Endothelial cell of umbilical vein (primary cell): ENCODE measurements at regions of chr18 and their contacts with region 1.

Region 1: DNA sequence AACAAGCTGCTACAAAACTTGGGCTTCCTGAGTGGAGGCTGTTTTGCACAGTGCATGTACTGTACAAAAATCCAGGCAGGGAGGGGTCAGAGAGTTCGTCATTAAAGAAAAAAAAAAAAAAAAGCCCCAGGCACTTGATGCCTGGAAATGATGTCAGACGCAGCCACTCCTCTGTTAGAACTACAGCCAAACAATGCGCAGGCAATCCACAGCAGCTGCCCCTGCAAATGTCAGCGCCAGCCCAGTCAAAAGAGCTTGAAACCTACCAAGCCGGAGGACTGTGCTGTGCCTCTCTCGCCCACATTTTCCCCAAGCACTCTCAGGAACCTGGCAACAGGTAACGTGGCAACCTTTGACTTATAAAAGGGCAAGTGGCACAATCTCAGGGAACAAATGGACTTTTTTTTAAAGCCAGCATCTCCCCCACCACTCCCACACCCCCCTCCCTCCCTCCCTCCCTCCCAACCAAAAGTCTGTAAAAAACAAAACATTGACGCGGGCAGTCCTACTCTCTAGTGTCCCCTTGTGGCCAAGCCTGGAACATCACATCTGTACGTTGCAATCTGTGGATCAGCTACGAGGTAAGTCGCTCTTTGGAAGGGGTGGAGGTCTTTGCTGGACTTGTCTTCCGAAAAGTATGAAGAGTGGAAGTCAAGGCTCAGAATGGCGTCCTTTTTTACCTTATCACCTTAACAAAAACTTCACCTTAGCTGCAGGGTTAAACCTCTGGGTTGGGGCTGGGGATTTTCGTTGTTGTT is 144.1 kb downstream of the TGIF1 start:
- DNase-seq: peak; percentile 98
- H3K4me3 ChIP-seq: peak overlapping the region; percentile 8 to 93 (median 48)
- H3K27ac ChIP-seq: peak overlapping the region; percentile 100
- H3K4me1 ChIP-seq: peaks cover 48% of the 10 kb centered on the region
- H3K27me3 ChIP-seq: no peaks in the 10 kb centered on the region
- CTCF ChIP-seq: peak; percentile 62 to 80
- POLR2A ChIP-seq: peak; percentile 81

Region 2: DNA sequence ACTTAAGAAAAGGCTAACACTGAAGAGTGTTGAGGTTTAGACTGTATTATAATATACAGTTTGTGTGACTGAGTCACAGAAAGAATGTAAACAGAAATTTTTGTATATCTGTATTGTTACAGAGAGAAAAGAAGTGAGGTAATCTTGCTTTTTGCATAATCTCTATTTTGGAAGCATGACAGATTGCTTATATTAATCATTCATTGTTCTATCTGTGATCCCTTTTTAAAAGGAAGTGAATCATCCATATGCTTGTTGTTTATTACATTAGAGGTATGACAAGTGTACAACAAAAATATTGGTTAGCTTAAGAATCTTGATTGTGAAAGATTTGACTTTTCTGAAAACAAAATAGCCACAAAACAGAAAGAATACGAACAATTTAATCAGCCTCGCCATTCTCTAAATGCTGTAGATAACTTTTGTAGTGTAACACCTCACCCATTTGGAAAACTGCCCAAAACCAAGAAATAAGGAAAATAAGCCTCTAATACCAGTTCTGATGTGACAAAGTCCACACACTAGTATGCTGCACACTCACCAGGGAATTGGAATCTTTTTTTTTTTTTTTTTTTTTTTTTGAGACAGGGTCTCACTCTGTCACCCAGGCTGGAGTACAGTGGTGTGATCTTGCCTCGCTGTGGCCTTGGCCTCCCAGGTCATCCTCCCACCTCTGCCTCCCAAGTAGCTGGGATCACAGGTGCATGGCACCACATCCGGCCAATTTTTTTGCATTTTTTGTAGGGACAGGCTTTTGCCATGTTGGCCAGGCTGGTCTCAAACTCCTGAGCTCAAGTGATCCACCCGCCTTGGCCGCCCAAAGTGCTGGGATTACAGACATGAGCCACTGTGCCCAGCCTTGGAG is 489.7 kb before region 1 on chr18:
- CTCF ChIA-PET with region 1: no interaction called
- POLR2A ChIA-PET with region 1: no interaction called
- dilution Hi-C with region 1: no loop called
- intact Hi-C with region 1: no loop called
- DNase-seq: peak; percentile 91
- H3K4me3 ChIP-seq: peak overlapping the region in 1 of 3 experiments; percentile 21
- H3K27ac ChIP-seq: peak overlapping the region; percentile 96
- H3K4me1 ChIP-seq: peaks cover 30% of the 10 kb centered on the region
- H3K27me3 ChIP-seq: no peaks in the 10 kb centered on the region
- CTCF ChIP-seq: no peak
- POLR2A ChIP-seq: no peak

Region 3: GRCh38 chr18:3281456-3282400 is 312.4 kb before region 1 on chr18:
- CTCF ChIA-PET with region 1: interaction called, 79 read pairs
- POLR2A ChIA-PET with region 1: interaction called, 7 read pairs
- dilution Hi-C with region 1: no loop called
- intact Hi-C with region 1: loop called (anchors 1 kb)
- DNase-seq: peak; percentile 91
- H3K4me3 ChIP-seq: no peak overlapping the region
- H3K27ac ChIP-seq: peak overlapping the region; percentile 84
- H3K4me1 ChIP-seq: peaks cover 38% of the 10 kb centered on the region
- H3K27me3 ChIP-seq: no peaks in the 10 kb centered on the region
- CTCF ChIP-seq: peak; percentile 6 to 21
- POLR2A ChIP-seq: no peak

Region 4: GRCh38 chr18:3454365-3455089 is 139.6 kb before region 1 on chr18:
- CTCF ChIA-PET with region 1: interaction called, 59 read pairs
- POLR2A ChIA-PET with region 1: interaction called, 12 read pairs
- dilution Hi-C with region 1: no loop called
- intact Hi-C with region 1: loop called (anchors 1 kb)
- DNase-seq: peak; percentile 95
- H3K4me3 ChIP-seq: peak overlapping the region; percentile 43 to 92 (median 90)
- H3K27ac ChIP-seq: peak overlapping the region; percentile 98
- H3K4me1 ChIP-seq: peaks cover 54% of the 10 kb centered on the region
- H3K27me3 ChIP-seq: no peaks in the 10 kb centered on the region
- CTCF ChIP-seq: peak; percentile 51 to 60
- POLR2A ChIP-seq: no peak

Region 5: DNA sequence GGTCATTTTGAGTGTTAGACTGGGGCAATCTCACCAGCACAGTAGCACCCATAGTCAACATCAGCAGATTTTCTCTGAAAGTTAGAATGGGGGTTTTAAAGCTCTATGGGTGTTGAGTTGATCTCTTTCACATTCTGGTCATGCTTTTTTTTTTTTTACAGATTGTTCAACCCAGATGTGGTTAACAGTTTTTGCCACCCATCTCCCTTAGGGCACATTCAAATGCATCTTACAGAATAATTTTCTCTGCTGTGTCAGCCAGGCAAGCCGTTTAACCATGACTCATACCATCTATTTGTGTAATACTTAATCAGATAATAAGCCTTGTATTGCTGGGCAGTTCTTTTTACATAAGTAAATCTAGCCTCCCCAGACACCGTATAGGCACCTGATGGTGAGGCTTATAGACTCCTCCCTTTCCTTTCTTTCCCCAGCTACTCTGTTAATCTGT is 82.1 kb before region 1 on chr18:
- CTCF ChIA-PET with region 1: no interaction called
- POLR2A ChIA-PET with region 1: no interaction called
- dilution Hi-C with region 1: no loop called
- intact Hi-C with region 1: no loop called
- DNase-seq: peak; percentile 44
- H3K4me3 ChIP-seq: no peak overlapping the region
- H3K27ac ChIP-seq: no peak overlapping the region
- H3K4me1 ChIP-seq: no peaks in the 10 kb centered on the region
- H3K27me3 ChIP-seq: no peaks in the 10 kb centered on the region
- CTCF ChIP-seq: no peak
- POLR2A ChIP-seq: no peak

Region 6: DNA sequence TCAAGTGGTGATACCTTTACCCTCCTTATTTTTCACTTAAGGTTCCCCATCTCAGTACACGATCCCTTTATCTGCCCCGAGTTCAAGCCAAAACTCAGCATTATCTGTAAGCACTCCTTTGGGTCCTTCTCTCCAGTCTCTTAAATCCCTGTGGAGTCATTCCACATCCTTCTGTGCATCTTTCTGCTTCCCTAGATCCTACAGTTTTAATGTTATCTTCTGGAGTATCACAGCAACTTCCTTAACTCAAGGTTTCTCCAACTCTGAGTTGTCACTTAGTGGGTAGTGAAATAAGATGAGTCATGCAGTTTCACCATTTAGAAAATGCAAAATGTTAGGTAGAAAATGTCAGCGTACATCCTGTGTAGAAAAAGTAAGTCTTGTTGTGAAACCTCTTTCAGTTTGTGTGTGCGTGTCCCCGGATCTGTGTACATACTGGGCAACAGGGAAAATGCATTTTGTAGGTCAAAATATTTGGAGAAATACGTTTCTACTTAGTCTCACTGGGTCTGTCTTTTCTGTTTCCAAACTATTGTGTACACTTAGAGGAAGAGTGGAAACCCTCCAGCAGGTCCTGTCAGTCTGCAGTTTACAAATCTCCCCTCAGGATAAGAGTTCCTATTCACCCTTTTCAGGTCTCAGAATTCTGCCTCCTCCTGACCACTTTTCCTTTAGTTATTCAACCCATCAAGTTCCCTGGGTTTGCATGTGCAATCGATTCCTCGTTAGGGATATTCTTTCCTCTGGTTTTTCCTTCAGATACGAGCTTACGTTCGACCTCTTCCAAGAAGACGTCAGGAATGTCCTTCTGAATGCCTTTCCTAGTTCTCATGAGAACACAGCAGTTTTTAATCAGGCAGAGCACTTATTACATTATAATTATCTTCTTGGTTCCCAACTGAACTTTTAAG is 10.7 kb after region 1 on chr18:
- CTCF ChIA-PET with region 1: interaction called, 52 read pairs
- POLR2A ChIA-PET with region 1: interaction called, 17 read pairs
- dilution Hi-C with region 1: no loop called
- intact Hi-C with region 1: loop called (anchors 1 kb)
- DNase-seq: peak; percentile 90
- H3K4me3 ChIP-seq: peak overlapping the region; percentile 41 to 95 (median 83)
- H3K27ac ChIP-seq: peak overlapping the region; percentile 96
- H3K4me1 ChIP-seq: peaks cover 43% of the 10 kb centered on the region
- H3K27me3 ChIP-seq: no peaks in the 10 kb centered on the region
- CTCF ChIP-seq: no peak
- POLR2A ChIP-seq: peak; percentile 32

Region 7: DNA sequence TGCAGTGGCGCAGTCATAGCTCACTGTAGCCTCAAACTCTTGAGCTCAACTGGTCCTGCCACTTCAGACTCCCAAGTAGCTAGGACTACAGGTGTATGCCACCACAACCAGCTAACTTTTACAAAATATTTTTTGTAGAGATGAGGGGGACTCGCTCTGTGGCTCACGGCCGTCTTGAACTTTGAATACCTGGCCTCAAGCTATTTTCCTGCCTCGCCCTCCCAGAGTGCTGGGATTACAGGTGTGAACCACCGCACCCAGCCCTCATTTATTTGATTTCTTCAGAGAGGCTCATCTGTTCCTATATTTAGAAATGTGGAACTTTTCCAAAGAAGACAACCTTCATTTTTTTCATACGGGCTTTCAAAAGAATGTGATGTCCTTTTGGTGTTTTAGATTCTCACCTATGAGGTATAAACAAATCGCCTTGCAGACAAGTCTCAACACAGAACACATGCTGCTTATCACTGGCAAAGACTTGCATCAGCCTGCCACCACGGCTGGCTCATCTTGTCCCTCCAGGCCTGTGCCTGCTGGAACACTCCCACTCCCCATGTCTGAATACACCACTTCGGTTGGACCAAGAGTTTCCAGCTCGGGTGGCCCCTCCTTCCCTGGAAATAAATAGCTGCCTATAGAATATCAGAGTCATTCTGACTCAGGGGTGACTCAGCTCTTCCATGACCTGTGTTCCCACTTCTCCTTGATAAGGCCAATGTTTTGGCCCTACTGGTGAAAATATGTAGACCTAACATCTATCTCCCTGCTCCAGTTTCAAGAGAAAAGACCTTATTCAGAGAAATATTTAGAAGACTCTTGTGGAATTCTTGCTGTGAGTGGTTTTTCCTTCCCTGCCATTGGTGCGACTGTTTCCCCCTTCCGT is 58.5 kb after region 1 on chr18:
- CTCF ChIA-PET with region 1: interaction called, 13 read pairs
- POLR2A ChIA-PET with region 1: interaction called, 7 read pairs
- dilution Hi-C with region 1: no loop called
- intact Hi-C with region 1: loop called (anchors 1 kb)
- DNase-seq: peak; percentile 97
- H3K4me3 ChIP-seq: peak overlapping the region in 1 of 3 experiments; percentile 42
- H3K27ac ChIP-seq: peak overlapping the region; percentile 83
- H3K4me1 ChIP-seq: peaks cover 46% of the 10 kb centered on the region
- H3K27me3 ChIP-seq: no peaks in the 10 kb centered on the region
- CTCF ChIP-seq: peak in 1 of 2 donors; percentile 4
- POLR2A ChIP-seq: no peak

Region 8: DNA sequence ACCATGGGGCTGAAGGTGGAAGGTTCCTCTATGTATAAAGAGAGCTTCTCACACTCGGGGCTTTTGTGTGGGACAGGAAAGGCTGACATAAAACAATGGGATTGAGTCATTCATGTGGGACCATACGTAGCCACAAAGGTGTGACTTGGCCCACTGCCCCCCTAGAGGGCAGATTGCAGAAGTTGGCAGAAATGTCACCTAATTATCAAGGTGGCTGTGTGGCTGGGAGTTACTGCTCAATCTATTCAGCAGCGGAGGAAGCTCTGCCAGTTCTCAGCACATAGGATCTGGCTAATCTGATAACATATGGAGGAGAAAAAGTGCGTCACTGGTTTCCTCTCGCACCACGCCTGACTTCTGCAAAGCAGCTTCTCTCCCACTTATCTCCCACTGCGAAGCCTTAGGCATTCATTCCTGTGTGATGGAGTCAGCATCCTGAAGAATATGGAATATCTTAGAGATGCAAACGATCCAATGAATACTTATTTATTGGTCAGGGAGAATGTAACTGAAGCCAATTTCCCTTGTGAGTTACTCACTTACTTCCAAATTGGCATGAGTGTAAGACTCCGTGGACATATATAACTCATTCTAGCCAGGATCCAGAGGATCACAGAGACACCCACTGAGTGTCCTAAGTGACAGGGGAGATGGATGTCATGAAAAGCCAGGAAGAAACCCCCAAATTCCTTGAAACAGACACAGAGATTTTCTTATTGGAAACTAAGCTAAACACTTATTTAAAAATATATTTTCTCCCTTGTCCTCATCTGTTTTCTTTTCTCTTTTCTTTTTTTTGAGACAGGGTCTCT is 200.7 kb after region 1 on chr18:
- CTCF ChIA-PET with region 1: interaction called, 3 read pairs
- POLR2A ChIA-PET with region 1: no interaction called
- dilution Hi-C with region 1: no loop called
- intact Hi-C with region 1: loop called (anchors 2 kb)
- DNase-seq: peak; percentile 97
- H3K4me3 ChIP-seq: no peak overlapping the region
- H3K27ac ChIP-seq: peak overlapping the region; percentile 95
- H3K4me1 ChIP-seq: peaks cover 34% of the 10 kb centered on the region
- H3K27me3 ChIP-seq: no peaks in the 10 kb centered on the region
- CTCF ChIP-seq: peak in 1 of 2 donors; percentile 6
- POLR2A ChIP-seq: no peak

Region 9: DNA sequence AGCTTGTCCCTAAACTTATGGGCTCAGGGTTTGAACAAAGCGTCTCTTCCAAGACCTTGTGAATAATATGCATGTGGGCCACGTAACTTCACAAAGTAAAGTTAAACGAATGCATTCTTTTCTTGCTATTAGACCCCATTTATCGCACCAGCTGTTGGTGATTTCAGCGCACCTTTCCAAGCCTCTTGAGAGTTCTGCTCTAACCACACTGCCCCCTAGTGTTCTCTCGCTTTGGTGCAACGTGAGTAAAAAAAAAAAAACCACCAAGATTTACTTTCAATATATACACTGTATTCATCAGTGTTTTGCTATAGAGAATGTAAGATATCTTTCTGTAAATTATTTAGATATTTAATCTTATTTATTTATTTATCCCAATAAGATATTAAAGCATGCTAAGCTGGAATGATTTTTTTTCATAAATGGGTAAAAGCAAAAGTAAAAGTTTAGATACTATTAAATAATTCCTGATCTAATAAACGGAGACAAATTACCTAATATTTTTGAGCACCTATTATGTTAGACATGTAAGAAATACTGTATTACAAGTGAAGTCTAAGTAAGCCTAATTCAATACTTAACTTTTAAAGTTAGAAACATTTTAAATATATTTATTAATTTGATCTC is 401.5 kb after region 1 on chr18:
- CTCF ChIA-PET with region 1: interaction called, 4 read pairs
- POLR2A ChIA-PET with region 1: no interaction called
- dilution Hi-C with region 1: no loop called
- intact Hi-C with region 1: loop called (anchors 5 kb)
- DNase-seq: peak; percentile 78
- H3K4me3 ChIP-seq: no peak overlapping the region
- H3K27ac ChIP-seq: no peak overlapping the region
- H3K4me1 ChIP-seq: no peaks in the 10 kb centered on the region
- H3K27me3 ChIP-seq: no peaks in the 10 kb centered on the region
- CTCF ChIP-seq: peak; percentile 75 to 85
- POLR2A ChIP-seq: no peak